ENCODE measurements at regions of chr12 and their contacts with region 1.

Region 1: GRCh38 chr12:89709157-89709994 is 738 bp upstream of the ATP2B1 start:
- DNase-seq: peak; percentile 98 to 100 (median 99)
- ATAC-seq: peak; percentile 77
- H3K4me3 ChIP-seq: peak overlapping the region; percentile 86 to 96
- H3K4me3 Mint-ChIP-seq: peak overlapping the region; percentile 93
- H3K27ac ChIP-seq: peak overlapping the region; percentile 96 to 99
- H3K27ac Mint-ChIP-seq: peak overlapping the region; percentile 96
- H3K4me1 ChIP-seq: peaks cover 31% of the 10 kb centered on the region
- H3K4me1 Mint-ChIP-seq: peaks cover 36% of the 10 kb centered on the region
- H3K27me3 ChIP-seq: no peaks in the 10 kb centered on the region
- H3K27me3 Mint-ChIP-seq: no peaks in the 10 kb centered on the region
- CTCF ChIP-seq: no peak

Region 2: DNA sequence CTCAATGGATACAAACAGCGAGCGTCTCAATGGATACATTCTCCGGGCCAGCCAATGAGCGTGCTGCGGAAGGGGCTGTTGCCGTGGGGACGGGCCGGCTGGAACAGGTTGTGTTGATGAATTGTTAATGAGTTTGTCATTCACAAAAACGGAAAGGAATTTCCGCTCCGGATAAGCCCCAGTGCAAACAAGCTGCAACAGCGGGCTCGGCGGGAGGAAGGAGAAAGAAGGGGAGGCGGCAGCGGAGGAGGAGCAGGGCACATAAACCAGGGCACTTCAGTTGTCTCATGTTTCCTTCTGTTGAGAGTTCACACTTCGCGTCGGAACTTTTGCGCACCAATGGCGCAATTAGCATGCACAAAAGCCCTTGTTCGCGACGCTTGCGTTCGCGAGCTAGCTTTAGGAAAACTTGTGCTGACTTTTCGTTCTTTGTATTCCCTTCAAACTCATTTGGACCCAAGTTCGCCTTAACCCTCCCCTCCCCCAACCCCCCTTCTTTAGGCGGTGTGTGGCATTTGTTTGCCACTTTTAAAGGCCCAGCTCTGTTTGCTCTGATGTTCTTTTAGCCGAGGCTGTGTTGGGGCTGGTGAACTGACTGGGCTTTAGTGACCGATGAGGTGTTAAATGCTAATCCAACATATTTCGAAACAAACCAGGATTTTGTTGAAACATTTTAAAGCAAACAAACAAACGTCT is 356.7 kb before region 1 on chr12 and contains the start of gene DUSP6:
- CTCF ChIA-PET with region 1: no interaction called
- POLR2A ChIA-PET with region 1: no interaction called
- intact Hi-C with region 1: loop called in 1 of 2 experiments (anchors 2 kb)
- DNase-seq: peak; percentile 55 to 91 (median 76)
- ATAC-seq: peak; percentile 71
- H3K4me3 ChIP-seq: peak within 1 kb of the TSS; percentile 54 to 74
- H3K4me3 Mint-ChIP-seq: peak within 1 kb of the TSS; percentile 91
- H3K27ac ChIP-seq: peak within 1 kb of the TSS; percentile 45 to 55
- H3K27ac Mint-ChIP-seq: peak within 1 kb of the TSS; percentile 88
- H3K4me1 ChIP-seq: peaks cover 24% of the 10 kb centered on the region
- H3K4me1 Mint-ChIP-seq: peaks cover 43% of the 10 kb centered on the region
- H3K27me3 ChIP-seq: no peaks in the 10 kb centered on the region
- H3K27me3 Mint-ChIP-seq: peaks cover 3% of the 10 kb centered on the region
- CTCF ChIP-seq: no peak
- total RNA-seq, gene DUSP6: 3.0 to 3.9 TPM

Region 3: GRCh38 chr12:89663577-89664357 is 45.6 kb before region 1 on chr12:
- CTCF ChIA-PET with region 1: interaction called, 4 read pairs
- POLR2A ChIA-PET with region 1: interaction called, 5 read pairs
- intact Hi-C with region 1: loop called in 1 of 2 experiments (anchors 2 kb)
- DNase-seq: peak in 2 of 9 experiments; percentile 17 to 24
- ATAC-seq: peak; percentile 63
- H3K4me3 ChIP-seq: no peak overlapping the region
- H3K4me3 Mint-ChIP-seq: peak overlapping the region; percentile 0
- H3K27ac ChIP-seq: no peak overlapping the region
- H3K27ac Mint-ChIP-seq: peak overlapping the region; percentile 3
- H3K4me1 ChIP-seq: peaks cover 41% of the 10 kb centered on the region
- H3K4me1 Mint-ChIP-seq: peaks cover 72% of the 10 kb centered on the region
- H3K27me3 ChIP-seq: no peaks in the 10 kb centered on the region
- H3K27me3 Mint-ChIP-seq: no peaks in the 10 kb centered on the region
- CTCF ChIP-seq: no peak

Region 4: DNA sequence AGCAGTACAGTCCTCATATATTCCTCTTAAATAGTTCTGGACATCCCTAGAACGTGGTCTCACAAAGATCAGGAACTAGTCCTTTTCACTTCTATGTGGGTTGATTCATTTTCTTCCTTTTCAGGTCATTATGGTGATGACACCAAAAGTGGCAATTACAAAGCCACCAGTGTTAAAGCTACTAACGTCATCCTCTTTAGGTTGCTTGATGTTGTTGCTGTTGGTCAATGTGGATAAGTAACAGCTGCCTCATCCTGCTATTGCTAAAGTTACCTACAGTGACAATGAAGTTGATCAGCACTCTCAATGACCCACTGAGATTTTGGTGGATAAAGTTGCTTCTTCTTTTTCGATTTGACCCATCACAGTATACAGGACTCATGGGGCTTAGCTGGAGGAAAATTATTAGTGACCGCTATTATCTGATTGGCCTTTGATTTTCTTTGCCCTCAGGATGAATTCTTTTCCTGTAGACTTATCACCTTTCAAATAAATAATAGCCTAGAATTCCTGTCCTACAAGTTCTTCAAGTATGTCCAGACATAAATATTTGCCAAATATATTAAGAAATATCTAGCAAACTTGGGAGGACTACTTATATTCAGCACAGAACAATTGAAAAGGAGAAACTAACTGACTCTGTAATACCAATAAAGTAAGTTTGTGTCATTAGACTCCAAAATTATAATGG is 53.3 kb after region 1 on chr12:
- CTCF ChIA-PET with region 1: no interaction called
- POLR2A ChIA-PET with region 1: interaction called, 8 read pairs
- intact Hi-C with region 1: loop called in 1 of 2 experiments (anchors 1 kb)
- DNase-seq: peak in 2 of 9 experiments; percentile 41 to 66
- ATAC-seq: peak; percentile 48
- H3K4me3 ChIP-seq: no peak overlapping the region
- H3K4me3 Mint-ChIP-seq: no peak overlapping the region
- H3K27ac ChIP-seq: no peak overlapping the region
- H3K27ac Mint-ChIP-seq: no peak overlapping the region
- H3K4me1 ChIP-seq: peaks cover 23% of the 10 kb centered on the region
- H3K4me1 Mint-ChIP-seq: peaks cover 53% of the 10 kb centered on the region
- H3K27me3 ChIP-seq: no peaks in the 10 kb centered on the region
- H3K27me3 Mint-ChIP-seq: no peaks in the 10 kb centered on the region
- CTCF ChIP-seq: no peak

Region 5: GRCh38 chr12:89882050-89882449 is 172.7 kb after region 1 on chr12:
- CTCF ChIA-PET with region 1: no interaction called
- POLR2A ChIA-PET with region 1: interaction called, 23 read pairs
- intact Hi-C with region 1: loop called (anchors 1 to 5 kb)
- DNase-seq: peak in 2 of 9 experiments; percentile 30 to 52
- ATAC-seq: peak; percentile 37
- H3K4me3 ChIP-seq: no peak overlapping the region
- H3K4me3 Mint-ChIP-seq: no peak overlapping the region
- H3K27ac ChIP-seq: peak overlapping the region; percentile 47 to 76
- H3K27ac Mint-ChIP-seq: peak overlapping the region; percentile 95
- H3K4me1 ChIP-seq: peaks cover 49% of the 10 kb centered on the region
- H3K4me1 Mint-ChIP-seq: peaks cover 60% of the 10 kb centered on the region
- H3K27me3 ChIP-seq: no peaks in the 10 kb centered on the region
- H3K27me3 Mint-ChIP-seq: no peaks in the 10 kb centered on the region
- CTCF ChIP-seq: no peak

Region 6: DNA sequence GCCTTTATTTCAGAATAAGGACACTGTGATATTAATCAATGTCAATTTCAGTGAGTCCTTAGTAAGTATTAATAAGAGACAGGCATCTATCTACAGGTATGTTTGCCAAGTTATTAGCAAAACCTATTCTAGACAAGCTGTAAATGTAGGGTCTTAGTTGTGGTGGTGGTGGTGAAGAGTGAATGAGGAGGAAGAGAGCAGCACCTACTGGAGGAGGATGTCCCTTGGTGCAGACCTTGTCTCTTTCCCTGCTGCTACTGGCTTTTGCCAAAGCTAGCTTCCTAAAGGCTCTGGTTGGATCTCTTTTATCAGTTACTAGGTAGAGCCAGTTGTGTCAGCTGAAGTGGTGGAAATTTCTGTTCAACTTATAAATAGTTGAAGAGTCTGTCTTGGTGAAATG is 304.0 kb after region 1 on chr12:
- CTCF ChIA-PET with region 1: no interaction called
- POLR2A ChIA-PET with region 1: no interaction called
- intact Hi-C with region 1: loop called in 1 of 2 experiments (anchors 5 kb)
- DNase-seq: peak in 2 of 9 experiments; percentile 46 to 64
- ATAC-seq: no peak
- H3K4me3 ChIP-seq: no peak overlapping the region
- H3K4me3 Mint-ChIP-seq: no peak overlapping the region
- H3K27ac ChIP-seq: no peak overlapping the region
- H3K27ac Mint-ChIP-seq: no peak overlapping the region
- H3K4me1 ChIP-seq: no peaks in the 10 kb centered on the region
- H3K4me1 Mint-ChIP-seq: peaks cover 3% of the 10 kb centered on the region
- H3K27me3 ChIP-seq: no peaks in the 10 kb centered on the region
- H3K27me3 Mint-ChIP-seq: no peaks in the 10 kb centered on the region
- CTCF ChIP-seq: peak; percentile 15

Region 7: GRCh38 chr12:90124289-90124688 is 414.9 kb after region 1 on chr12:
- CTCF ChIA-PET with region 1: no interaction called
- POLR2A ChIA-PET with region 1: no interaction called
- intact Hi-C with region 1: no loop called
- DNase-seq: no peak
- ATAC-seq: no peak
- H3K4me3 ChIP-seq: no peak overlapping the region
- H3K4me3 Mint-ChIP-seq: no peak overlapping the region
- H3K27ac ChIP-seq: no peak overlapping the region
- H3K27ac Mint-ChIP-seq: no peak overlapping the region
- H3K4me1 ChIP-seq: no peaks in the 10 kb centered on the region
- H3K4me1 Mint-ChIP-seq: no peaks in the 10 kb centered on the region
- H3K27me3 ChIP-seq: no peaks in the 10 kb centered on the region
- H3K27me3 Mint-ChIP-seq: peaks cover 9% of the 10 kb centered on the region
- CTCF ChIP-seq: no peak

Measured in CD8-positive, alpha-beta T cell (primary cell).